Head of caudate nucleus (tissue), 42 donors: ENCODE measurements at regions of chr19 and their contacts with region 1.

Region 1: GRCh38 chr19:36772311-36773222 is at the start of gene ZNF850:
- DNase-seq: peak; percentile 91 to 98 (median 95)

Region 2: DNA sequence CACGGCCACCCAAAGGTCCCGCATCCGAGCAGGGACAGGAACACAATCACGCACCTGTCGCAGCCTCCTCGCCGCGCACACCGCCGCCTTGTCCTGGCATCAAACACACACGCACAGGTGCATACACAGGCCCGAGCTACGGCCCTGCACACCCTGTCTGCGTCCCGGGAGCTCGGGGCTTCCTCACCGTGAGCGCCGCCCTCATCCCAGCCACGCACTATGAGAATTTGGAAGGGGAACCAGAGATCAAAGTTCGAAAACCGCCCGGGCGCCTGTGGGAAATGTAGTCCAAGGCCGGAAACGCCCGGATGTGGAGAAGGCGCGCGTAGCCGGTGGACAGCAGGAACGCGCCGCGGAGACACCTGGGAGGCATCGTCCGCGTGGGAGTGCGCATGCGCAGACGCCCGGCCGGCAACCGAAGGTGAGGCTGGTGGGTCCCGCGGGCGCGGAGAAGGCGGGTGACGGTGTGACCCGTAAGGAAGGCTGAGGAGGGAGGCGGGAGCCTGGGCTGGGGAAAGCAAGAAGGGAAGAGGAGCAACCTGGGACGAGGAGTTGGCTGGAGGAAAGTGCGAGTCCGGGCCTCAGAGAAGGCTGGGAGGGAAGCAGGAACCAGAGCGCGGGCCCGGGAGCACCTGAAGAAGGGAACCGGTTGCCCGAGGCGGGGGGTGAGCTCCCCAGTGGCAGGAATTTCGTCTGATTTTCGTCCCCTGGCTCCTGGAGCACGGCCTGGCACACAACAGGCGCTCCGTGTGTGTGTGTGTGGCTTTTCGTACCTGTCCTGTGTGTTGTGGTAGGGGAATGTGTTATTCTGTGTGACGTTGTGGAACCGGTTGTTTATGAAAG is 85.1 kb before region 1 on chr19 and contains the start of gene ZNF567:
- intact Hi-C with region 1: loop called (anchors 10 kb)
- DNase-seq: peak; percentile 93 to 100 (median 98)